Psoas muscle (tissue), 8 donors: ENCODE measurements at regions of chr7 and their contacts with region 1.

Region 1: DNA sequence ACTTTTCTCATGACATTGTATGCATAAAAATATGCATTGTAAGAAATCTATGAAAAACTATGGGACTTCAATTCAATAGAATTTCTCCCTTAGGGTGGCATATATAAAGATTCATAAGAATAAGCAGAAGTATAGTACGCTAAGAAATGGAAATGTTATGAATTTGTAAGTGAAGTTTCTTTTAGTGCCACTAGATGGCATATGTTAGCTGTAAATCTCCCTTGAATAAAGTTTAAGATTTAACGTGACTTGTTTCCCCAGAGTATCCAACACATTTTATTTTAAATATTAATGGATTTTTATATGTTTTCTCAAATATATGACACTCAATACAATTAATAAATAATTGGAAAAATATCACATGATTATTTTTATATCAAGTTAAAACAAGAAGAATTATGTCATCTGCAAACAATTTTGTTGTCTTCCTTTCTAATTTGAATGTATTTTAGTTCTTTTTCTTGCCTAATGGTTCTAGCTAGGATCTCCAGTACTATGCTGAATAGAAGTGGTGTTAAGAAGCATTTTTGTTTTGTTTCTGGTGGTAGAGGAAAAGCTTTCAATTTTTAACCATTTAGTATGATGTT is 287.2 kb downstream of the HGF start:
- DNase-seq: no peak
- ATAC-seq: peak in 2 of 4 donors; percentile 49 to 70
- H3K4me3 ChIP-seq: no peak overlapping the region
- H3K27ac ChIP-seq: no peak overlapping the region
- H3K4me1 ChIP-seq: no peaks in the 10 kb centered on the region
- H3K27me3 ChIP-seq: no peaks in the 10 kb centered on the region
- CTCF ChIP-seq: peak; percentile 76

Region 2: DNA sequence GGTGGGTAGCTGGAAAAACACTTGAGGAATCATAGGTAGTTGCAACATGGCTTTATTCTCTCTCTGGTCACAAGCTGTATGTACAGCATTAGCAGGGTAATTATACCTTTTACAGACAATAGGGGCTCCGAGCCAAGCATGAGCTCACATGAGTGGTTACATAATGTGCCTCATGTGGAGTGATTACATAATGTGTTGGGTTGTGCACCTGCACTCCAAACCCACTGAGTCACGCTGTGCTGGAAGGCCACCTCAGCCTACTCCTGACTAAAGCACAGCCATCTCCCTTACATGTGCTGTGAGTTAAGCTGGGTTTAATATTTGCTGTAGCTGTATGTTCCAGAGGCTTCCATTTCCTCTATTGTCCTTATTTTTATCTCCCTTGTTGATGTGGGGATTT is 215.2 kb before region 1 on chr7:
- intact Hi-C with region 1: no loop called
- DNase-seq: no peak
- ATAC-seq: no peak
- H3K4me3 ChIP-seq: no peak overlapping the region
- H3K27ac ChIP-seq: no peak overlapping the region
- H3K4me1 ChIP-seq: no peaks in the 10 kb centered on the region
- H3K27me3 ChIP-seq: no peaks in the 10 kb centered on the region
- CTCF ChIP-seq: no peak

Region 3: GRCh38 chr7:82605247-82605872 is 1122.7 kb after region 1 on chr7:
- intact Hi-C with region 1: loop called (anchors 10 kb)
- DNase-seq: no peak
- ATAC-seq: no peak
- H3K4me3 ChIP-seq: no peak overlapping the region
- H3K27ac ChIP-seq: no peak overlapping the region
- H3K4me1 ChIP-seq: no peaks in the 10 kb centered on the region
- H3K27me3 ChIP-seq: no peaks in the 10 kb centered on the region
- CTCF ChIP-seq: peak; percentile 74

Region 4: GRCh38 chr7:82729172-82730030 is 1246.7 kb after region 1 on chr7:
- intact Hi-C with region 1: loop called in 1 of 2 experiments (anchors 10 kb)
- DNase-seq: no peak
- ATAC-seq: no peak
- H3K4me3 ChIP-seq: no peak overlapping the region
- H3K27ac ChIP-seq: no peak overlapping the region
- H3K4me1 ChIP-seq: no peaks in the 10 kb centered on the region
- H3K27me3 ChIP-seq: no peaks in the 10 kb centered on the region
- CTCF ChIP-seq: peak; percentile 37